Panc1 (cell line): ENCODE measurements at regions of chr22 and their contacts with region 1.

Region 1: DNA sequence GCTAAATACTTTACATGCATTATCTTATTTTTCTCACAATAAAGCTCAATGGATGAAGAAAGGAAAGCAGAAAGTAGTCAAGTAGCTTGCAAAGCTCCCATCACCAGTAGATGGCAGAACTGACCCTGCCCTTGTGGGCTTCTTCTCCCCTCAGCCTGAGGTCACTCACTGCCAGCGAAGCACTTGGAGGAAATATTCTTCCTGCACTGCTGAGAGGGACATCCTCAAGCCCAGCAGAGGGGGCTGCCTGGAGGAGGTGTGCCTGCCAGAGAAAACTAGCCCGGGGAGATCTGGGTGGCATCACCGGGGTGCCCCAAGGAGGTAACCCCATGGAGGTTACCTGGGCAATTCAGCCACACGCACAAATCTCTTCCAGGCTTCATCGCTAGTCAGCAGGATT is 6.6 kb downstream of the APOL4 start:
- DNase-seq: peak; percentile 25
- ATAC-seq: peak; percentile 87
- H3K4me3 ChIP-seq: no peak overlapping the region
- H3K27ac ChIP-seq: no peak overlapping the region
- H3K4me1 ChIP-seq: no peaks in the 10 kb centered on the region
- H3K27me3 ChIP-seq: no peaks in the 10 kb centered on the region
- CTCF ChIP-seq: peak; percentile 82

Region 2: DNA sequence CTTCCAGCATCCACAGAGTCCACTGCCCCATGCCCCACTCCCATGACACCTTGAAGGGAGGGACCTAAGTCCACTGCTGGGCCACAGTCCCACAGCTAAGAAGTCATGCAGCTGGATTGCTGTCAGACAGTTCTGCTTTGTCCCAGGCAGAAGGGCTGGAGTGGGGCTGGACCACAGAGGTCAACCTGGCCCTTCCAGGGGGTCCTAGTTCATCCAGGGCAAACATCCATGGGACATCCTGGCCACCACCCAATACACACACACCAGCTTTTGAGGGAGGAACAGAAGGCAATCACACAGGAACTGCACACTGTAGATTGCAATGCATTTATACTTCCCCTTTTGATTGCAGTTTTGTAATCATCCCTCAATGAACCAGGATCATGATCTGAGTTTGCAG is 17.9 kb after region 1 on chr22:
- CTCF ChIA-PET with region 1: interaction called, 11 read pairs
- POLR2A ChIA-PET with region 1: no interaction called
- in situ Hi-C with region 1: no loop called
- intact Hi-C with region 1: no loop called
- DNase-seq: no peak
- ATAC-seq: no peak
- H3K4me3 ChIP-seq: no peak overlapping the region
- H3K27ac ChIP-seq: no peak overlapping the region
- H3K4me1 ChIP-seq: no peaks in the 10 kb centered on the region
- H3K27me3 ChIP-seq: peaks cover 3% of the 10 kb centered on the region; the same call in 1 of the 2 replicates
- CTCF ChIP-seq: no peak

Region 3: DNA sequence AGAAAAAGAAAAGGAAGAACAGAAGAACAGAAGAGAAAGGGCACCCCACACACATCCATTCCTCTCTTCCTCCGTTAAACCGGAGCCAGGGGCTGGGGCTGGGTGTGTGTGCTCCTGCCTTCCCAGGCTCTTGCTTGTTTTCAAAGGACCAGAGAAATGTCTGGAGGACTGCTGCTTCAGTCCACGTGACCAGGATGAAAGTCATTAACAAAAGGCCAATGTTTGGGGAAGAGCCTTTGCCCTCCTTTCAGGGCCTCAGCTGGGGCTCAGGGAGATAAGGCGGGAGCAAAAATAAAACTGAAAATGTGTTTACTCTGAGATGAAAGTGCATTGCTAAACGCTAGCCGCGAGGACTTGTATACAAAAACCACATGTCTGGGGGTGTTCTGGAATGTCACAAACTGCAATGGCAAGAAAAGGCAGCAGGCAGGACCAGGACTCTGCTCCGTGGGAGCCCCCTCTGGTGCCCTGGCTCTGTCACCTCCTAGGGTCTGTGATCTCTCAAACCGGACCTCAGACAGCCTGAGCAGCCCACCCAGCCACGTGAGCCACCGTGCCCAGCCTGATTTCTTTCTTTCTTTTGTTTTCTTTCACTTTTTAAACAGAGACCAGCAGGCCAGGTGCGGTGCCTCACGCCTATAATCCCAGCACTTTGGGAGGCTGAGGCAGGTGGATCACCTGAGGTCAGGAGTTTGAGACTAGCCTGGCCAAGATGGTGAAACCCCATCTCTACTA is 224.4 kb after region 1 on chr22:
- CTCF ChIA-PET with region 1: no interaction called
- POLR2A ChIA-PET with region 1: no interaction called
- in situ Hi-C with region 1: no loop called
- intact Hi-C with region 1: no loop called
- DNase-seq: no peak
- ATAC-seq: peak; percentile 44
- H3K4me3 ChIP-seq: no peak overlapping the region
- H3K27ac ChIP-seq: peak overlapping the region; percentile 36
- H3K4me1 ChIP-seq: peaks cover 11% of the 10 kb centered on the region
- H3K27me3 ChIP-seq: no peaks in the 10 kb centered on the region
- CTCF ChIP-seq: no peak